Mammary epithelial cell (primary cell): ENCODE measurements at regions of chr7 and their contacts with region 1.

Region 1: GRCh38 chr7:100852048-100852872 is at the start of gene SLC12A9:
- DNase-seq: peak; percentile 92
- H3K4me3 ChIP-seq: peak within 1 kb of the TSS; percentile 82 to 86 (median 85)
- H3K27ac ChIP-seq: peak within 1 kb of the TSS; percentile 25
- H3K4me1 ChIP-seq: peaks cover 6% of the 10 kb centered on the region
- H3K27me3 ChIP-seq: no peaks in the 10 kb centered on the region
- CTCF ChIP-seq: peak; percentile 79 to 95
- total RNA-seq, gene SLC12A9: 11.7 to 31.0 TPM

Region 2: DNA sequence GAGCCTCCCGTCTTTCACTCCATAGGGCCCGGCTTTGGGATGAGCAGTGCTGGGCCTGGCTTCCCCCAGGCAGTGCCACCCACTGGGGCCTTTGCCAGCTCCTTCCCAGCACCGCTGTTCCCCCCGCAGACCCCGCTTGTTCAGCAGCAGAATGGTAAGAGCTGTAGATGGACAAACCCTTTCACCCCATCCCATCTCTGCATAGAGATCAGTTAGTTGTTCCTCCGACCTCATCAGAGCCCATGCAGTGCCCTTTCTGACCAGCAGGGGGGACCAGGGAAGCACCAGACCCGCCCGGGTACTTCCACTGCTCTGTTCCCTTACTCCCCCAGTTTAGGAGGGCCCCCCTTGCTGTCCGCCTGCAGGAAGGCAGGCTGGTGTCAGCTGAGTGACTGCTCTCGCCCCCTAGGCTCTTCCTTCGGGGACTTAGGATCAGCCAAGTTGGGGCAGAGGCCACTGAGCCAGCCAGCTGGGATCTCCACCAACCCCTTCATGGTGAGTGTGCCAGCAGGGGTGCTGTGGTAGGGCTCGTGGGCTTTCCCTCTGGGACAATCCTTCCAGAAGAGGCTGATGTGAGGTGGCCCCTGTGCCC is 288.4 kb before region 1 on chr7:
- CTCF ChIA-PET with region 1: interaction called, 3 read pairs
- dilution Hi-C with region 1: no loop called
- in situ Hi-C with region 1: loop called in 1 of 2 experiments (anchors 25 kb)
- intact Hi-C with region 1: loop called (anchors 1 kb)
- DNase-seq: peak; percentile 43
- H3K4me3 ChIP-seq: no peak overlapping the region
- H3K27ac ChIP-seq: no peak overlapping the region
- H3K4me1 ChIP-seq: no peaks in the 10 kb centered on the region
- H3K27me3 ChIP-seq: no peaks in the 10 kb centered on the region
- CTCF ChIP-seq: peak; percentile 95 to 97

Region 3: GRCh38 chr7:100691676-100692577 is 160.3 kb before region 1 on chr7:
- CTCF ChIA-PET with region 1: no interaction called
- dilution Hi-C with region 1: no loop called
- in situ Hi-C with region 1: no loop called
- intact Hi-C with region 1: loop called (anchors 5 kb)
- DNase-seq: peak; percentile 50
- H3K4me3 ChIP-seq: peak overlapping the region in 2 of 3 experiments; percentile 86 to 95
- H3K27ac ChIP-seq: no peak overlapping the region
- H3K4me1 ChIP-seq: peaks cover 29% of the 10 kb centered on the region
- H3K27me3 ChIP-seq: no peaks in the 10 kb centered on the region
- CTCF ChIP-seq: peak; percentile 89 to 93

Region 4: GRCh38 chr7:100711369-100711768 is 140.9 kb before region 1 on chr7:
- CTCF ChIA-PET with region 1: no interaction called
- dilution Hi-C with region 1: loop called (anchors 5 kb)
- in situ Hi-C with region 1: loop called (anchors 5 to 10 kb)
- intact Hi-C with region 1: no loop called
- DNase-seq: no peak
- H3K4me3 ChIP-seq: no peak overlapping the region
- H3K27ac ChIP-seq: no peak overlapping the region
- H3K4me1 ChIP-seq: peaks cover 8% of the 10 kb centered on the region
- H3K27me3 ChIP-seq: no peaks in the 10 kb centered on the region
- CTCF ChIP-seq: no peak

Region 5: GRCh38 chr7:100726996-100727761 is 125.1 kb before region 1 on chr7:
- CTCF ChIA-PET with region 1: no interaction called
- dilution Hi-C with region 1: no loop called
- in situ Hi-C with region 1: no loop called
- intact Hi-C with region 1: loop called (anchors 1 kb)
- DNase-seq: no peak
- H3K4me3 ChIP-seq: no peak overlapping the region
- H3K27ac ChIP-seq: no peak overlapping the region
- H3K4me1 ChIP-seq: peaks cover 9% of the 10 kb centered on the region
- H3K27me3 ChIP-seq: peaks cover 1% of the 10 kb centered on the region
- CTCF ChIP-seq: no peak

Region 6: GRCh38 chr7:100803398-100804233 is 48.6 kb before region 1 on chr7:
- CTCF ChIA-PET with region 1: interaction called, 12 read pairs
- dilution Hi-C with region 1: no loop called
- in situ Hi-C with region 1: no loop called
- intact Hi-C with region 1: loop called (anchors 1 kb)
- DNase-seq: peak; percentile 82
- H3K4me3 ChIP-seq: peak overlapping the region in 1 of 3 experiments; percentile 3
- H3K27ac ChIP-seq: peak overlapping the region; percentile 9
- H3K4me1 ChIP-seq: peaks cover 45% of the 10 kb centered on the region
- H3K27me3 ChIP-seq: no peaks in the 10 kb centered on the region
- CTCF ChIP-seq: no peak

Region 7: DNA sequence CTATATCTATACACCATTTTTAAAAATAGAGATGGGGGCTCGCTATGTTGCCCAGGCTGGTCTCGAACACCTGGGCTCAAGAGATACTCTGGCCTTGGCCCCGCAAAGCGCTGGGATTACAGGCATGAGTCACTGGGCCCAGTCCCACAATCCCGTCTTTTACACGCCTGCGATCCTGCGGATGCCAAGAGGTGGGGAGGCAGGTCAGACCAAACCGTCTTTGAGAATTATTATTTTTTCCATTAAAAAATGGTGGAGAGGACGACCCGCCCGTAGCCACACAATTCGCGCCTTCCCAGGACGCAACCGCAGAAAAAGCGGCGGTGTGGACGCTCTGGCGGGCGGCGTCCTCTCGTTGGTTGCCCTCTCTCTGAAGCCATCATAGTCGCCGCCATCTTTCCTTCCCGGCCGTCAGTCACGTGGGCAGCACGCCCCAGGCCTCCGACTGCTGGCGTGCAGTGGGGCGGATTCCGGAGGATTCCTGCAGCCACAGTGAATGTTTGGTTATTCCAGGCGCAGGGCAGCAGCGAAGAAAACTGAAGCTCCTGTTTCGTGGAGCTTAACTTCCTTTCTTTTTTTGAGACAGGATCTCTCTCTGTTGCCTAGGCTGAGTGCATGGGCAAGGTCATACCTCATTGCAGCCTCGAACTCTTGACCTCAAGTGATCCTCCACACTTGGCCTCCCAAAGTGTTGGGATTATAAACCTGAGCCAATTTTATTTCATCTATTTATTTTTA is 15.0 kb before region 1 on chr7:
- CTCF ChIA-PET with region 1: no interaction called
- dilution Hi-C with region 1: no loop called
- in situ Hi-C with region 1: no loop called
- intact Hi-C with region 1: no loop called
- DNase-seq: peak; percentile 84
- H3K4me3 ChIP-seq: peak overlapping the region in 2 of 3 experiments; percentile 10 to 29
- H3K27ac ChIP-seq: no peak overlapping the region
- H3K4me1 ChIP-seq: peaks cover 12% of the 10 kb centered on the region
- H3K27me3 ChIP-seq: no peaks in the 10 kb centered on the region
- CTCF ChIP-seq: no peak

Region 8: DNA sequence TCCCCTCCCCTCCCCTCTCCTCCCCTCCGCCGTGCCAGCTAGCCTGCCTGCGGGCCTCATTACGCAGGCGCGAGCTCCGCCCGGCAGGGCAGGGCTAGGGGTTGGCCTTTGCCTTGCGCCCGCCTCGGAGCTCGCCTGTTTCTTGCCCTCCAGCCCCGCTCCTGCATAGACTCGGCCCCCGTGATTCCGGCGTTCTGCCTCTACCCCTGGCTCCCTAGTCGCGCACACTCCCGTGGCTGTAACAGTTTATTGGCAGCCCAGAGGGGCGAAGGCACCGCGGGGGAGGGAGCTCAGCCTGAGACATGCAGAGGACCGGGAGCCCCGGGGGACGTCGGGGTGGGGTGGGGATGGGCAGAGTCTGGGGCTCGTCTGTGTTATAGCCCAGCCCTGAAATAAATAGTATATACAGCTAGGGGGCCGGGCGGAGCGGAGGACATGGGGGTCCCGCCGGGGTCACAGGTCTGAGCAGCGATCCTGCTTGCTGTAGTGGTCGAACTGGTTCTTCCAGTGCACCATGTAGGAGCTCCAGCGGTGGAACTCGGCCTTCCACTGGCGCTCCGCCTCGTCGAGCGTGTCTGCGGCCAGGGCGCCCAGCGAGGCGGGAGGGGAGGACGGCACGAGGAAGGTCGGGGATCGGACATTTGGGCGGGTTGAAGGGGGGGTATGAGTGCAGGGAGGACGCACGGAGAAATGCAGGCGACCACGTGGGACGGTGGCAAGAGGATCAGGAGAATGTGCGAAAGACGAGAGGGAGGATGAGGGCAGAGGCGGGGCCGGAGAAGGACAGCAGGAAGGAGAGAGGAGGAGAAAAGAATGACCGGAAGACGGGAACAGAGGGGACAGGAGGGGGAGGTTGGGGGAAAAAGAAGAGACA is 37.7 kb after region 1 on chr7:
- CTCF ChIA-PET with region 1: no interaction called
- dilution Hi-C with region 1: loop called (anchors 5 kb)
- in situ Hi-C with region 1: no loop called
- intact Hi-C with region 1: no loop called
- DNase-seq: peak; percentile 90
- H3K4me3 ChIP-seq: peak overlapping the region; percentile 50 to 79 (median 51)
- H3K27ac ChIP-seq: peak overlapping the region; percentile 29
- H3K4me1 ChIP-seq: peaks cover 36% of the 10 kb centered on the region
- H3K27me3 ChIP-seq: no peaks in the 10 kb centered on the region
- CTCF ChIP-seq: no peak